Naive thymus-derived CD8-positive, alpha-beta T cell (primary cell): ENCODE measurements at regions of chr19 and their contacts with region 1.

Region 1: DNA sequence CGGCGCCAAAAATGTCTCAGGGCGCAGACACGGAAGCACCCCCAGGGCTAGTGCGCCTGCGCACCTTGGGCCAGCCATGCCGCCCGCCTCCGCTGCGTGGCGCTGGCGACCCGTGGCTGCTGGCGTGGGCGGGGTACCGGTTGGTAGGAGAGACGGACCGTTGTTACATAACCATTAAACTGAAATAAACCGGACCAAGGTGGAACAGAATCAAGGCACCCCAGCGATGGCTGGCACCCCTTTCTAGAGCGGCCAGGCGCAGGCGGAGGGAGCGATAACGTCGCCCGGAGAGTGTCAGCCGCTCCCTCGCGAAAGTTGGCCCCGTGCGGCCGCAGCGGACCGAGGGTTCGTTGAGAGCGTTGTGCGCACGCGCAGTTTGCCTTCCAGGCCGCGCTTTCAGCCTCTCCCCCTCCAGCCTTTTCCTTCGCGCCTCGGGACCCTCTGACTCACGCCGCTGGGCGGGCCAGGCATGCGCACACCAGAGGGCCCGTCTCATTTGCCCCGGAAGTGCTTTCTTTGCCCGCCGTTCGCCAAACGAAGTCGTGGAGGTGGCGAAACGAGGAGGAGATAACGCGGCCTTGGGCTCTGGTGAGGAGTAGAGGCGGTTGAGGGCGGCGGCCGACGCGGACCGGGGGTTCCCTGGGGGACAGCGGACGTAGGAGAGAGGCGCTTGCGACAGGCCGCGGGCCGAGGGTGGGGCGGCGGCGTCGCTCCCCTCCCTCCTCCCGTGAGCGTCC is at the starts of genes PLEKHJ1 and SF3A2:
- DNase-seq: peak; percentile 97 to 100 (median 98)
- ATAC-seq: peak; percentile 79 to 84
- H3K4me3 Mint-ChIP-seq: peak within 1 kb of the TSS; percentile 90 to 100 (median 99)
- H3K27ac Mint-ChIP-seq: peak within 1 kb of the TSS; percentile 96 to 100 (median 100)
- H3K4me1 Mint-ChIP-seq: peaks cover 38 to 67% (median 63%) of the 10 kb centered on the region in 4 donors
- H3K27me3 Mint-ChIP-seq: peaks cover 0 to 4% (median 0%) of the 10 kb centered on the region in 5 donors
- polyA plus RNA-seq, gene PLEKHJ1: 85.2 to 106 (median 101) TPM
- polyA plus RNA-seq, gene SF3A2: 16.3 to 33.5 (median 26.0) TPM

Region 2: GRCh38 chr19:2253106-2254053 is 16.9 kb after region 1 on chr19:
- POLR2A ChIA-PET with region 1: interaction called, 147 read pairs
- DNase-seq: peak in 9 of 10 donors; percentile 34 to 81 (median 62)
- ATAC-seq: peak; percentile 57 to 61
- H3K4me3 Mint-ChIP-seq: peak overlapping the region; percentile 71 to 86 (median 82)
- H3K27ac Mint-ChIP-seq: peak overlapping the region in 5 of 10 donors; percentile 33 to 69 (median 60)
- H3K4me1 Mint-ChIP-seq: peaks cover 3 to 30% (median 22%) of the 10 kb centered on the region in 4 donors
- H3K27me3 Mint-ChIP-seq: peaks cover 0 to 4% (median 0%) of the 10 kb centered on the region in 5 donors

Region 3: DNA sequence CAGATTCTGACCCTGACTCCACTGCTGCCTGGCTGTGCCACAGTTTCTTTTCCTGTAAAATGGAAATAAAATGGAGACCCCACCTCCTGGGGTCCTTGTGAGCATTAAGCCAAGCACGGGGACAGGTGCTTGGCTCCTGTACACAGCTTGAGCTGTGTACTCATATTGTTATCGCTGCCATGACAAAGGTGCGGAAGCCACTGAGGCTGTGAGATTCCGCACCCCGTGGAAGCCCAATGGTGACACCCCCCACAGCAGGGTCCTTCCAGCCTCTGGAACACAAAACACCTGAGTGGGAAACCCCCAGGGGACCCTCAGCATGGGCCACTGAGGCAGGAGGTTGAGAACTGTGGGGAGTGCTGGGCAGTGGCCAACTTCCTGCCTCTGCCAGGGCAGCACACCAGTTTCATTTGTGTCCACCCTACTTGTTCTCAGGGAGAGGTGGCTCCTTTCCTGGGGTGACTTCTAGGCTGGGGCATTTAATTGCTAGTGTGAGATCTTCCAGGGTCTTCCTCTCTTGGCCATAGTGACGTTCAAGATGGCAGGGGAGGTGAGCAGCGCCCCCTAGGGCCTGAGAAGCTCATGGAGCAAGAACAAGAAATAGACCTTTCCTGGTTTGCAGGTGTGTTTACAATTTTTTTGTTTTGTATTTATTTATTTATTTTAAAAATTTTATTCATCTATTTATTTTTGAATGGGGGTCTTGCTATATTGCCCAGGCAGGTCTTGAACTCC is 25.1 kb after region 1 on chr19:
- POLR2A ChIA-PET with region 1: interaction called, 262 read pairs
- DNase-seq: peak in 3 of 10 donors; percentile 41 to 52 (median 47)
- ATAC-seq: no peak
- H3K4me3 Mint-ChIP-seq: peak overlapping the region in 1 of 10 donors; percentile 57
- H3K27ac Mint-ChIP-seq: peak overlapping the region in 6 of 10 donors; percentile 16 to 85 (median 65)
- H3K4me1 Mint-ChIP-seq: peaks cover 3 to 51% (median 23%) of the 10 kb centered on the region in 4 donors
- H3K27me3 Mint-ChIP-seq: no peaks in the 10 kb centered on the region